Heart left ventricle (tissue), 16 donors: ENCODE measurements at regions of chr10 and their contacts with region 1.

Region 1: DNA sequence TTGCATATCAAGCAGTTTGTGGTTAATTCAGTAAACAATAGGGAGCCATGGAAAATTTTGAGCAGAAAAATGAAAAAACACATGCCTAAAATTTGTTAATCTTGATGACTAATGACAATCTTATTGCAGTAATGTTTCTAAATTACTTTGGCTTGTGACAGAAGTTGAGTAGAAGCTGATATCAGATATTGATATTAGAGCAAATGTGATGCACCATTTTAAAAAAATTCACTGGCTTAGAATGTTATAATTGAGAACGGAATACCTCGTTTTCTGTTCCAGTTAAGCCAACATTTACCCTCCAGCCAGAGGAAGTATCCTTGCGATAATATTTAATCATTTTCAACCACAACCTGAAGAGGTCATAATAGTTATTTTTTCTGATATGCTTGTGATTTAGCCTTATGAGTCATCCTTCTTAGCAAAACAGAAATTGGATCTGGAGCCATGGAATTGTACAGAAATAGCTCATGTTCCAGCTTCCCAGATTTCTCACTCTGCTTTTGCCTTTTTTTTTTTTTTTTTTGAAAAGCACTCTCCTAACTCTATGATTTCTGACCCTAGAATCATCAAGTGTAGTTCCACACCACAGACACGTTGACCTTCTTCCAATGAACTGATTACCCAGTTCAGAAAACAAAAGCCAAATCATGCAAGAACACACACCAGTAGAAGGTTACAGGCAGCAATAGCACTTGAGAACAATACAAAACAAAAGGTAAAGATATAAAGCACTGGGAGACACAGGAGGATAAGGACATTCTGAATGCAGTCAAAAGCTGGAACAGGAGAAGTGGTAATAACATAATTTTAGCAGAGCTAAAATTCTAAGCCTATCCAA is 96.8 kb upstream of the PHYHIPL start:
- DNase-seq: no peak
- ATAC-seq: peak in 3 of 4 donors; percentile 51 to 71 (median 62)
- H3K4me3 ChIP-seq: no peak overlapping the region
- H3K27ac ChIP-seq: peak overlapping the region in 10 of 12 donors; percentile 12 to 51 (median 30)
- H3K4me1 ChIP-seq: peaks cover 0 to 19% (median 0%) of the 10 kb centered on the region in 12 donors
- H3K27me3 ChIP-seq: no peaks in the 10 kb centered on the region
- CTCF ChIP-seq: peak in 1 of 12 donors; percentile 8
- POLR2A ChIP-seq: no peak

Region 2: DNA sequence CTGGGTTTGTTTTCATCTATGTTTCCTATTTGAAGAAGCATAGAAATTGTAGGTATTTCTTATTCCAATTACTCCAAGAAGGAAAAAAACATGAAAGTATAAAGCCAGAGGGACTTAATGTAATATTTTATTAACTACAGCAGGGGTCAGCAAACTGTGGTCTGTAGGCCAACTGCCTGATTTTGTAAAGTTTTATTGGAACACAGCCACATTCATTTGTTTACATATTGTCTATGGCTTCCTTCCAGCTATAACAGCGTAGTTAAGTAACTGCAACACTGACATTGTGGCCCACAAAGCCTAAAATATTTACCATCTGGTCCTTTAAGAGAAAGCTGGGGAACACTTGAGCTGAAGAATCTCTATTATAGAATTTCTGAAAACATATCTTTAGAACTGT is 260.7 kb before region 1 on chr10:
- intact Hi-C with region 1: loop called in 1 of 10 experiments (anchors 10 kb)
- DNase-seq: no peak
- ATAC-seq: peak in 1 of 4 donors; percentile 10
- H3K4me3 ChIP-seq: no peak overlapping the region
- H3K27ac ChIP-seq: no peak overlapping the region
- H3K4me1 ChIP-seq: peaks cover 0 to 40% (median 12%) of the 10 kb centered on the region in 12 donors
- H3K27me3 ChIP-seq: no peaks in the 10 kb centered on the region
- CTCF ChIP-seq: peak in 2 of 12 donors; percentile 19 to 23
- POLR2A ChIP-seq: no peak

Region 3: GRCh38 chr10:59181668-59182067 is 102.1 kb after region 1 on chr10:
- intact Hi-C with region 1: no loop called
- DNase-seq: peak in 1 of 5 donors; percentile 5
- ATAC-seq: peak in 2 of 4 donors; percentile 71 to 73
- H3K4me3 ChIP-seq: no peak overlapping the region
- H3K27ac ChIP-seq: no peak overlapping the region
- H3K4me1 ChIP-seq: peaks cover 0 to 8% (median 3%) of the 10 kb centered on the region in 12 donors
- H3K27me3 ChIP-seq: peaks cover 3 to 37% (median 9%) of the 10 kb centered on the region in 9 donors
- CTCF ChIP-seq: peak; percentile 20 to 72 (median 54)
- POLR2A ChIP-seq: no peak